ENCODE measurements at regions of chr11 and their contacts with region 1.

Region 1: GRCh38 chr11:65833297-65834030 is at the start of gene SNX32:
- DNase-seq: peak; percentile 92
- ATAC-seq: peak; percentile 99
- H3K4me3 Mint-ChIP-seq: no peak within 1 kb of the TSS
- H3K27ac Mint-ChIP-seq: no peak within 1 kb of the TSS
- H3K4me1 Mint-ChIP-seq: peaks cover 8% of the 10 kb centered on the region
- H3K27me3 Mint-ChIP-seq: no peaks in the 10 kb centered on the region
- CTCF ChIP-seq: no peak
- total RNA-seq, gene SNX32: 0.37 and 1.0 TPM in 2 replicates

Region 2: GRCh38 chr11:65606876-65607613 is 226.4 kb before region 1 on chr11:
- CTCF ChIA-PET with region 1: no interaction called
- POLR2A ChIA-PET with region 1: no interaction called
- intact Hi-C with region 1: no loop called
- DNase-seq: no peak
- ATAC-seq: peak; percentile 34
- H3K4me3 Mint-ChIP-seq: no peak overlapping the region
- H3K27ac Mint-ChIP-seq: no peak overlapping the region
- H3K4me1 Mint-ChIP-seq: peaks cover 49% of the 10 kb centered on the region
- H3K27me3 Mint-ChIP-seq: no peaks in the 10 kb centered on the region
- CTCF ChIP-seq: no peak

Region 3: GRCh38 chr11:65850831-65851811 is 17.7 kb after region 1 on chr11:
- CTCF ChIA-PET with region 1: no interaction called
- POLR2A ChIA-PET with region 1: interaction called, 13 read pairs
- intact Hi-C with region 1: no loop called
- DNase-seq: no peak
- ATAC-seq: peak; percentile 25
- H3K4me3 Mint-ChIP-seq: no peak overlapping the region
- H3K27ac Mint-ChIP-seq: no peak overlapping the region
- H3K4me1 Mint-ChIP-seq: peaks cover 30% of the 10 kb centered on the region
- H3K27me3 Mint-ChIP-seq: no peaks in the 10 kb centered on the region
- CTCF ChIP-seq: no peak